ENCODE measurements at regions of chr17 and their contacts with region 1.

Region 1: DNA sequence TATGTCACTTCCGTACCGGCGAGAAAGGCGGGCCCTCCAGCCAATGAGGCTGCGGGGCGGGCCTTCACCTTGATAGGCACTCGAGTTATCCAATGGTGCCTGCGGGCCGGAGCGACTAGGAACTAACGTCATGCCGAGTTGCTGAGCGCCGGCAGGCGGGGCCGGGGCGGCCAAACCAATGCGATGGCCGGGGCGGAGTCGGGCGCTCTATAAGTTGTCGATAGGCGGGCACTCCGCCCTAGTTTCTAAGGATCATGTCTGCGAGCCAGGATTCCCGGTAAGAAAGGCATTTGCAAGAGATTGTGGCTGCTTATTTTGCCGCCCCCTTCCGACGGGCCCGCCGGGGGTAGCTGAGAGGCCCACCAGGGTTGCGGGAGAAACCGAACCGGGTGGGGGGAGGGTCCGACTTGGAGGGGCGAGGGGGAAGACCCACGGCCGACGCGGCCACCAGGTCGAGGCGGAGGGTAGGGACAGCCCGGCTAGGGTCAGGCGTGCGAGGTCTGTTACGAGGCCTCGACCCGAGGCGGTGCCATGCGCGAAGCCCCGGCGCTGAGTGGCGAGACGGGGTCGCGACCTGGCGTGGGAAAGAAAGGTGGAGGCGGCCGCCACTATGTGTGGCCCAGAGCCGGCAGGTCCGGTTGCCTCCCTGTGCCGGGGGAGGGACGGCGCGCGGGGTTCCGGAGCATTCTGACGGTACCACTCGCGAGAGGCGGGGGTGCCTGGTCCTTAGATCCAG is 6.7 kb upstream of the CD68 start:
- DNase-seq: peak; percentile 100
- H3K4me3 Mint-ChIP-seq: peak overlapping the region; percentile 85
- H3K27ac Mint-ChIP-seq: peak overlapping the region; percentile 99
- H3K4me1 Mint-ChIP-seq: peaks cover 55% of the 10 kb centered on the region
- H3K27me3 Mint-ChIP-seq: no peaks in the 10 kb centered on the region

Region 2: DNA sequence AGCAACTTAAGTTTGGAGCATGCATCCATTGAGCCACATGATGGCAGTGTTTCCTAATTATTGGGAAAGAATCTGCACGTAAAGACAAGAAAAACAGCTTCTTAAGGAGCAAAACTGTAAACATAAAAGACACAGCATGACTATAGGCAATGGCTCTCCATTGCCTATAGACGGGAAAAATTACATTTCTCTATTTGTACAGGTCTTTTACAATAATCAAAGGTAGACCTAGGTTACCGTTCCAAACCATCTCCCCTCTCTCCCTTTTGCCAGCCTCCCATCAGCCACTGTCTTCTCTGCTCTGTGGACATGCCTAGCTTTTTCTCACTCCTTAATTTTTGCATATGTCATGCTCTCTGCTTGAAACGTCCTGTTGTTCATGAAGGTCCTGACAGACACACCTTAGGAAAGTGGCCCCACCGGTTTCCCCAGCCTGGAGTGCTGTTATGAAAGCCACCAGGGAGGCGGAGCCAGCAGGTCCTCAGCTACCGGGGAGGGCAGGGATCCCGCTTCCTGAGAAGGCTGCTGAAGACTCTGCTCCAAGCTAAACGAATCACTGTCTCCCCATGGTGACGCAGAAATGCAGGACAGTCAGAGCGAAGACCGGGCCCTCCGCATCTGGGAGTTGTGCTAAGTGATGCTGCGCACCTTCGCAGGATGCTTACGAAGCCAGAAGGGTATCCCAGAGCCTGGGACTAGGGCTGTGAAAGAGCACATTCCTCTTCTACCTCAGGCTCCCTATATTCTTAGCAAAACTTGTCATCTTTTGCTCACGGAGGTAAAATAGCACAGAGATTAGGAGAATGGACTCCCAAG is 526.6 kb before region 1 on chr17:
- CTCF ChIA-PET with region 1: interaction called, 3 read pairs
- intact Hi-C with region 1: loop called (anchors 10 kb)
- DNase-seq: peak; percentile 67
- H3K4me3 Mint-ChIP-seq: peak overlapping the region; percentile 52
- H3K27ac Mint-ChIP-seq: peak overlapping the region; percentile 52
- H3K4me1 Mint-ChIP-seq: peaks cover 36% of the 10 kb centered on the region
- H3K27me3 Mint-ChIP-seq: no peaks in the 10 kb centered on the region

Region 3: DNA sequence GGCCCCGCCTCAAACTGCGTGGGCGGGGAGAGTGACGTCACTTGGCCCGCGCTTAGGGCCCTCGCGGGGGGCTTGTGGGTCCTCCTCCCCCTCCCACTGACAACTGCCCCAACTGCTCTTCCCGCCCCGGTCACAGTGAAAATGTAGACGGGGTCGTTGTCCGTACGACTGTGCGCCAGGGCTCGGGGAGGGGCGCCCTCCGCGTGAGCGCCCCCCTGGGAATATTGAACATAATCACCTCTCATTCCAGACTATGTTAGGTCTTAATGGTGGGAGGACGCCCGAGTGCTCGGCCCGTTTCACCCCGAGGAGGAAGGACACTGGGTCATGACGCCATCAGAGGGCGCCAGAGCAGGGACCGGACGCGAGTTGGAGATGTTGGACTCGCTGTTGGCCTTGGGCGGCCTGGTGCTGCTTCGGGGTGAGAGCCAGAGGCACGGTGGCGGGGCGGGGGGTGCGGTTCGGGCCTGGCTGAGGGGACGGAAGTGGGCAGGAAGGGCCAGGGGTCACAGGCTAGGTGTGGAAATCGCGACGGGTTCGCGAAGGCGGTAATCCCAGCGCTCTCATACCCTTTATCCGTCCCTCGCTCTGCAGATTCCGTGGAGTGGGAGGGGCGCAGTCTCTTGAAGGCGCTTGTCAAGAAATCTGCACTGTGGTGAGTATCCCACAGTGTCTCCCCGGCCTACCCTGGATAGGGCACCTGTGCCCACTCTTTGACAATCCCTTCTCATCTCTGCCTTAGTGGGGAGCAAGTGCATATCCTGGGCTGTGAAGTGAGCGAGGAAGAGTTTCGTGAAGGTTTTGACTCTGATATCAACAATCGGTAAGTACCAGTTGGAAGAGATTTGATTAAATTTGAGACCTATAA is 320.3 kb before region 1 on chr17 and contains the start of gene ELP5:
- CTCF ChIA-PET with region 1: no interaction called
- intact Hi-C with region 1: loop called (anchors 2 kb)
- DNase-seq: peak; percentile 93
- H3K4me3 Mint-ChIP-seq: peak within 1 kb of the TSS; percentile 86
- H3K27ac Mint-ChIP-seq: peak within 1 kb of the TSS; percentile 99
- H3K4me1 Mint-ChIP-seq: peaks cover 34% of the 10 kb centered on the region
- H3K27me3 Mint-ChIP-seq: no peaks in the 10 kb centered on the region
- total RNA-seq, gene ELP5: 52.4 to 53.5 TPM

Region 4: DNA sequence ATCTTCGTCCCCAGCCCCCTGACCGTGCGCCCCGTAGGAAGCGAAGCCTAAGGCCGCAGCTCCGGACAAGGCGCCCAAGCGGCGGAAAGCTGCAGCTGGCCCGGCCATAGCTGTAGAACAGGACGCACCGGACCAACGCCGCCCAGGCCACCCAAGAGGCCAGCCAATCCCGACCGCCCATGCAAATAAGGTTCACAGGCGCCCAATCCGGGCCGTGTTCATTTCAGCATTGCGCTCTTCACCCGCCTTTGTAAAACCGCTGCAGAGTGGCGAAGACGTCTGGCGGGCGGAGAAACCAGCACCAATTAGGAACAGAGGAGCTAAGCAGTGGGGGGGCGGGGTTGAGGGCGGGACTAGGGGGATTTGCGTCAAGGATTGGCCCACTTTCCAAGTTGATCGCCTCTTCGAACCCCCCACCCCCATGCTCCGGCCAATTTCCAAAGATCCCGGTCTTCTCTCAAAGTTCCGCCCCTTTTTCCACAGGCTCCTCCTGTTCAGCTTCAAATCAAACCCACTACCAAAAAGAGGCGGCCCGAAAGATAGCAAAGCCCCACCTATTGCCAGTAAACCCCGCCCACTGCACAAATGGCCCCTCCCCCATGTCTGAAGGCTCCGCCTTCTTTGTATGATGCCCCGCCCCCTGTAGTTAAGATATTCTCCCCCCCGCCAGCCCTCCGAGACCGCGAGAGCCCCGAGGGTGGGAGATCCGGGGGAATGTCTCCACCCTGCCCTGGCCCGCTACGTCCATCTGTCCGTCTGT is 168.6 kb before region 1 on chr17 and contains the start of gene TMEM256:
- CTCF ChIA-PET with region 1: no interaction called
- intact Hi-C with region 1: loop called (anchors 1 kb)
- DNase-seq: peak; percentile 99
- H3K4me3 Mint-ChIP-seq: peak within 1 kb of the TSS; percentile 93
- H3K27ac Mint-ChIP-seq: peak within 1 kb of the TSS; percentile 93
- H3K4me1 Mint-ChIP-seq: peaks cover 19% of the 10 kb centered on the region
- H3K27me3 Mint-ChIP-seq: peaks cover 2% of the 10 kb centered on the region
- total RNA-seq, gene TMEM256: 65.6 to 66.3 TPM

Region 5: GRCh38 chr17:7454980-7455379 is 117.8 kb before region 1 on chr17:
- CTCF ChIA-PET with region 1: interaction called, 3 read pairs
- intact Hi-C with region 1: loop called (anchors 1 kb)
- DNase-seq: no peak
- H3K4me3 Mint-ChIP-seq: peak overlapping the region; percentile 84
- H3K27ac Mint-ChIP-seq: peak overlapping the region; percentile 83
- H3K4me1 Mint-ChIP-seq: peaks cover 17% of the 10 kb centered on the region
- H3K27me3 Mint-ChIP-seq: no peaks in the 10 kb centered on the region

Region 6: GRCh38 chr17:7583253-7584109 is 10.7 kb after region 1 on chr17 and contains the start of gene MPDU1:
- CTCF ChIA-PET with region 1: no interaction called
- intact Hi-C with region 1: loop called (anchors 1 kb)
- DNase-seq: peak; percentile 96
- H3K4me3 Mint-ChIP-seq: peak within 1 kb of the TSS; percentile 95
- H3K27ac Mint-ChIP-seq: peak within 1 kb of the TSS; percentile 100
- H3K4me1 Mint-ChIP-seq: peaks cover 58% of the 10 kb centered on the region
- H3K27me3 Mint-ChIP-seq: no peaks in the 10 kb centered on the region
- total RNA-seq, gene MPDU1: 48.8 to 53.5 TPM

Measured in activated naive CD4-positive, alpha-beta T cell treated with anti-CD3 and anti-CD28 coated beads for 36 hours (primary cell).